K562 (cell line): ENCODE measurements at regions of chr6 and their contacts with region 1.

Region 1: DNA sequence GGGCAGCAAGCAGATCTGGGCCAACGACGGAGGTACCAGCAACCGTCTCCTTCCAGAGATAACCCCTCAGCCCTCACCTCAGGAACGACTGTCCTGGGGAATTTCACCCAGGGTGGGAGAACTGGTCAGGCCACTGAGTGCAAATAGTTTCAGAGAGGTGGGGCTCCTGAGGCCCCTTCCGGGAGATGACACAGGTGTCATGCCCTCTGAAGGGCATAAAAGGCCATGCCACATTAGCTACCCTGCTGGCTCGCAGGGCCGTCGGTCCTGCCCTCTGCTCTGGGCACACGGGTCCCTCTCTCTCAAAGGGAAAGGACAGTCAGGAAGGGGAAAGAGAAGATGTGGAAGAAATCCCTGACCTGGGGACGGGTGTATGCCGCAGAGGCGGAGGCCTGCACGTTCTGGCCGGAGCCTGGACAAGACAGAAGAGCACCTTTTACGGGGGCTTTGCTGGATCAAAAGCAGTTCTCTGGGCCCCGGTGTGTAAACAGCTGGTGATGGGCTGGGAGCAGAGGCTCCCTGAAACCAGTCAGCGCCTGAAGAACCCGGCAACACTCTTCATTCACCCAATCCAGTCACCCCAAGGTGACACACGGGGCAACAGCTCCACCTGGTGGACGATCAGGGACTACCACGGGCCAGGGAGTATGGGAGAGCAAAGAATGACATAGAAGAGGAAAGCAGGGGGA is 6.4 kb upstream of the TAF8 start:
- DNase-seq: peak; percentile 88 to 95 (median 90)
- ATAC-seq: peak; percentile 82
- H3K4me3 ChIP-seq: no peak overlapping the region
- H3K27ac ChIP-seq: no peak overlapping the region
- H3K4me1 ChIP-seq: peaks cover 60 to 68% of the 10 kb centered on the region in 2 experiments
- H3K27me3 ChIP-seq: no peaks in the 10 kb centered on the region
- CTCF ChIP-seq: peak; percentile 97 to 99 (median 99)
- EP300 ChIP-seq: peak; percentile 62
- POLR2A ChIP-seq: no peak
- RAD21 ChIP-seq: peak; percentile 100

Region 2: DNA sequence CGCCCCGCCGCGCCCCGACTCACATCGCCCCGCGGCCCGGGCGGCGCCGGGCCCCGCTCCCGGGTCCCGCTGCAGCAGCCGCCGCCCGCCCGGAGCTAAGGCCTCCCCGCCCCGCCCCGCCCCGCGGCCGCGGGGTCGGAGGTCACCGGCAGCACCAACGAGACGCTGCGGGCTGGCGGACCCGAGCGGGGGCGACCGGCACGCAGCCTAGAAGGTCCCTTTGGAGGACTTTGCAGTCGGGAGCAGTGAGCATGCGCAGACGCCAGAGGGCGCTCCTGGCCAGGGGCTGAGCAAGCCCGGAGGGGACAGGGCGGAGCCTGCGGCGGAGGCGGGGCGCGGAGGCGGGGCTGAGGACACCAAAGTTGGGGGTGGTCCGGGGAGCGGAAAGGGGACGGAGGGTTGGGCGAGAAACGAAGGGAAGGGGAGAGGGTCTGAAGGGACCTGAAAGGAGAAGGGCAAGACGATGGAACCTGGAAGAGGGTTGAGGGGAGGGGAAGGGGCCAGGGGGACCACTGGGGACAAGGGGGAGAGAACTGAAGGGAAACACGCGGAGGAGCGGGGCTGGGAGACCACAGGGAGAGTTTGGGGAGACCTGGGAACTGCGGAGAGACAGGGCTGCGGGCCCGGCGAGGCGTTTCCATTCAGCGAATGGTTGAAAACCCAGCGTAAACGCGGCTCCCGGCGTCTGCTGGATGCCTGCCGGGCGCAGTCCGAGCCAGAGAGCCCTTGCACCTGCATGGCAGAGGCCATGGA is 264.0 kb before region 1 on chr6 and contains the start of gene FRS3:
- CTCF ChIA-PET with region 1: interaction called, 50 read pairs
- POLR2A ChIA-PET with region 1: interaction called, 3 read pairs
- in situ Hi-C with region 1: loop called (anchors 5 kb)
- intact Hi-C with region 1: loop called (anchors 1 kb)
- DNase-seq: peak; percentile 98 to 99 (median 98)
- ATAC-seq: peak; percentile 94
- H3K4me3 ChIP-seq: peak within 1 kb of the TSS; percentile 69
- H3K27ac ChIP-seq: peak within 1 kb of the TSS; percentile 51; the same call in 2 of the 3 replicates
- H3K4me1 ChIP-seq: peaks cover 17 to 27% of the 10 kb centered on the region in 2 experiments
- H3K27me3 ChIP-seq: no peaks in the 10 kb centered on the region
- CTCF ChIP-seq: peak; percentile 94 to 99 (median 98)
- EP300 ChIP-seq: peak; percentile 44
- POLR2A ChIP-seq: no peak
- RAD21 ChIP-seq: peak; percentile 99
- polyA plus RNA-seq, gene FRS3: 0.03 to 0.06 TPM

Region 3: GRCh38 chr6:41801380-41801779 is 242.6 kb before region 1 on chr6:
- CTCF ChIA-PET with region 1: interaction called, 24 read pairs
- POLR2A ChIA-PET with region 1: interaction called, 5 read pairs
- in situ Hi-C with region 1: no loop called
- intact Hi-C with region 1: loop called (anchors 1 kb)
- DNase-seq: peak in 1 of 4 experiments; percentile 33
- ATAC-seq: peak; percentile 71
- H3K4me3 ChIP-seq: no peak overlapping the region
- H3K27ac ChIP-seq: no peak overlapping the region
- H3K4me1 ChIP-seq: peaks cover 0 to 3% of the 10 kb centered on the region in 2 experiments; a peak in 1 of 5 replicates
- H3K27me3 ChIP-seq: no peaks in the 10 kb centered on the region
- CTCF ChIP-seq: peak; percentile 54 to 71 (median 63); a peak in 5 of 6 replicates
- EP300 ChIP-seq: no peak
- POLR2A ChIP-seq: no peak
- RAD21 ChIP-seq: peak; percentile 70 to 78

Region 4: GRCh38 chr6:41895300-41896233 is 148.4 kb before region 1 on chr6 and contains the start of gene USP49:
- CTCF ChIA-PET with region 1: interaction called, 3 read pairs
- POLR2A ChIA-PET with region 1: interaction called, 5 read pairs
- in situ Hi-C with region 1: loop called (anchors 10 kb)
- intact Hi-C with region 1: loop called (anchors 2 kb)
- DNase-seq: peak; percentile 97 to 98 (median 98)
- ATAC-seq: peak; percentile 96
- H3K4me3 ChIP-seq: peak within 1 kb of the TSS; percentile 56
- H3K27ac ChIP-seq: peak within 1 kb of the TSS; percentile 79
- H3K4me1 ChIP-seq: peaks cover 8 to 11% of the 10 kb centered on the region in 2 experiments
- H3K27me3 ChIP-seq: no peaks in the 10 kb centered on the region
- CTCF ChIP-seq: peak in 1 of 3 experiments; percentile 1; a peak in 1 of 6 replicates
- EP300 ChIP-seq: no peak
- POLR2A ChIP-seq: peak; percentile 85
- RAD21 ChIP-seq: no peak
- polyA plus RNA-seq, gene USP49: 1.0 to 1.6 TPM

Region 5: GRCh38 chr6:41920921-41921711 is 122.8 kb before region 1 on chr6 and contains the starts of genes BYSL and MED20:
- CTCF ChIA-PET with region 1: interaction called, 11 read pairs
- POLR2A ChIA-PET with region 1: interaction called, 5 read pairs
- in situ Hi-C with region 1: no loop called
- intact Hi-C with region 1: no loop called
- DNase-seq: peak; percentile 95 to 98 (median 96)
- ATAC-seq: peak; percentile 89
- H3K4me3 ChIP-seq: peak within 1 kb of the TSS; percentile 82
- H3K27ac ChIP-seq: peak within 1 kb of the TSS; percentile 98
- H3K4me1 ChIP-seq: peaks cover 14 to 16% of the 10 kb centered on the region in 2 experiments; a peak in 4 of 5 replicates
- H3K27me3 ChIP-seq: no peaks in the 10 kb centered on the region
- CTCF ChIP-seq: peak; percentile 91 to 99 (median 98)
- EP300 ChIP-seq: peak; percentile 43; the same call in 1 of the 2 replicates
- POLR2A ChIP-seq: peak; percentile 88
- RAD21 ChIP-seq: peak in 1 of 2 experiments; percentile 20; a peak in 3 of 4 replicates
- polyA plus RNA-seq, gene BYSL: 22.2 to 25.8 TPM
- polyA plus RNA-seq, gene MED20: 63.8 to 80.9 TPM

Region 6: GRCh38 chr6:41941280-41942066 is 102.5 kb before region 1 on chr6 and contains the start of gene CCND3:
- CTCF ChIA-PET with region 1: interaction called, 33 read pairs
- POLR2A ChIA-PET with region 1: interaction called, 9 read pairs
- in situ Hi-C with region 1: loop called (anchors 5 kb)
- intact Hi-C with region 1: loop called (anchors 1 kb)
- DNase-seq: peak; percentile 92 to 98 (median 94)
- ATAC-seq: peak; percentile 84
- H3K4me3 ChIP-seq: peak within 1 kb of the TSS; percentile 81
- H3K27ac ChIP-seq: peak within 1 kb of the TSS; percentile 72
- H3K4me1 ChIP-seq: peaks cover 40 to 55% of the 10 kb centered on the region in 2 experiments
- H3K27me3 ChIP-seq: no peaks in the 10 kb centered on the region
- CTCF ChIP-seq: peak in 2 of 3 experiments; percentile 6 to 12; a peak in 1 of 6 replicates
- EP300 ChIP-seq: 0 out of 2 replicates have a peak, but pooled peaks have one; percentile 8
- POLR2A ChIP-seq: peak; percentile 70
- RAD21 ChIP-seq: no peak
- polyA plus RNA-seq, gene CCND3: 21.5 to 24.7 TPM

Region 7: DNA sequence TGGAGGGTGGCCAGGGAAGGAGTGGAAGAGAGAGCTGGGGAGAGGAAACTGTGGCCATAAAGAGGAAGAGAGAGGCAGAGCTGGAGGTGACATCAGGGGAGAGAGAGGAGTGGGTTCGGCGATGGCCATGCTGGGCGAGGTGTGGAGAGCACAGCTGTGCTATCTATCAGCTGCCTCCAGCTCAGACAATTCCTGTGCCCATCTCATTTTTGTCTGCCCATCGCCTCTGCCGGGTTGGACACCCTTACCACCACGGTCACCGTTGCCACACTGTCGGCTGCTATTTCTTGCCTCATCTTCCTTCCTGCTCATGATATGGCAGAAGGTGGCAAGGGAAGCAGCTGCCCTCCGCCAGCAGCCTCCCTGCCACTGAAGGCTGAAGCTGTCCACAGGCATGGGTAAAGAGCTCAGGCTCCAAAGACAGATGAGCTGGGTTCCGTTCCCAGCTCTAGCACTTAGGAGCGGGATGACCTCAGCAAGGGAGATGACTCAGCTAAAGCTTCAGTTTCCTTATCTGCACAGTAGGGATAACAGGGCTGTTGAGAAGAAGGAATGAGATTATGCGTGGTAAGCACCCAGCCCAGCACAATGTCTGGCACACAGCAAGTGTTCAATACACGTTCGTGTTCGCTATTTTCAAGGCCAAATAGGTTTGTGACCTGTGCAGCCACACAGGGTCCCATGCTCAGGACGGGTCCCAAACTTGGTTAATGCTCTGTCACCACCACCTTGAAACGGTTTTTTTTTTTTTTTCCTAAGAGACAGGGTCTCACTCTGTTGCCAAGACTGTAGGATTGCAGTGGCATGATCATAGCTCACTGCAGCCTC is 15.5 kb before region 1 on chr6:
- CTCF ChIA-PET with region 1: interaction called, 3 read pairs
- POLR2A ChIA-PET with region 1: interaction called, 31 read pairs
- in situ Hi-C with region 1: no loop called
- intact Hi-C with region 1: no loop called
- DNase-seq: peak; percentile 92 to 98 (median 94)
- ATAC-seq: peak; percentile 87
- H3K4me3 ChIP-seq: peak overlapping the region; percentile 29
- H3K27ac ChIP-seq: peak overlapping the region; percentile 98
- H3K4me1 ChIP-seq: peaks cover 69 to 77% of the 10 kb centered on the region in 2 experiments
- H3K27me3 ChIP-seq: no peaks in the 10 kb centered on the region
- CTCF ChIP-seq: no peak
- EP300 ChIP-seq: peak; percentile 96
- POLR2A ChIP-seq: peak; percentile 90
- RAD21 ChIP-seq: peak; percentile 6 to 37; a peak in 2 of 4 replicates

Region 8: DNA sequence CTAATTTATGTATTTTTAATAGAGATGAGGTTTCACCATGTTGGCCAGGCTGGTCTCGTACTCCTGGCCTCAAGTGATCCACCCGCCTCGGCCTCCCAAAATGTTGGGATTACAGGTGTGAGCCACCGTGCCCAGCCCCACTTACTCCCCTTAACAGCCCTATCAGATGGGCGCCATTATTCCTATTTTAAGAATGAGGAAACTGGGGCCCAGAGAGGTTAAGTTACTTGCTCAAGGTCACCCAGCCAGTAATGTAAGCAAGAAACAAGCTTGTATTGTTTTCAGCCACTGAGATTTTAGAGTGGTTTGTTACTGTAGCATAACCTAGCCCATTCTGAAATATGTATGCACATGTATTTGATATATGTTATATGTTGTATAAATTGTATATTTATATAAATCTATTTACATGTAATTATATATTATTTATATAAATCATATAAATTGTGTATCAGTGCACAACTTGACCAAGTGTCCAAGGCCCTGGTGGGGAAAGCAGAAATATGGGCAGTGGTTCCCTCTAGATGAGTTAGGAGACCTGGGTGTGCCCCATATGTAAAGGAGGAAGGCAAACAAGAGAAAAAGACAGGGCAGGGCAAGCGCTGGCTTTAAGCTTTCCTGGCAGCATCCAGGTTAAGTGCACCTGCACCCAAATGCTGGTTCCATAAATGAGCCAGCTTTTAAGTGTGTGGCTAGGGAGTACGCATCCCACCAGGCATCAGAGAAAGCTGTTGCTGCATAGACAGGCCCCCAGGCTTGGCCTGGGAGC is 128.1 kb after region 1 on chr6:
- CTCF ChIA-PET with region 1: no interaction called
- POLR2A ChIA-PET with region 1: no interaction called
- in situ Hi-C with region 1: no loop called
- intact Hi-C with region 1: no loop called
- DNase-seq: no peak
- ATAC-seq: no peak
- H3K4me3 ChIP-seq: no peak overlapping the region
- H3K27ac ChIP-seq: no peak overlapping the region
- H3K4me1 ChIP-seq: peaks cover 0 to 5% of the 10 kb centered on the region in 2 experiments; a peak in 1 of 5 replicates
- H3K27me3 ChIP-seq: no peaks in the 10 kb centered on the region
- CTCF ChIP-seq: no peak
- EP300 ChIP-seq: no peak
- POLR2A ChIP-seq: no peak
- RAD21 ChIP-seq: no peak